ENCODE measurements at regions of chr1 and their contacts with region 1.

Region 1: GRCh38 chr1:18902523-18903290 is at the start of gene ALDH4A1:
- DNase-seq: peak; percentile 100
- H3K4me3 ChIP-seq: peak within 1 kb of the TSS; percentile 75 to 93 (median 82)
- H3K27ac ChIP-seq: peak within 1 kb of the TSS; percentile 85 to 96 (median 89)
- H3K4me1 ChIP-seq: peaks cover 22 to 39% (median 30%) of the 10 kb centered on the region in 4 donors
- H3K27me3 ChIP-seq: no peaks in the 10 kb centered on the region
- CTCF ChIP-seq: peak in 1 of 3 experiments; percentile 5
- EP300 ChIP-seq: no peak
- POLR2A ChIP-seq: no peak
- total RNA-seq, gene ALDH4A1: 25.1 to 29.5 (median 27.2) TPM

Region 2: DNA sequence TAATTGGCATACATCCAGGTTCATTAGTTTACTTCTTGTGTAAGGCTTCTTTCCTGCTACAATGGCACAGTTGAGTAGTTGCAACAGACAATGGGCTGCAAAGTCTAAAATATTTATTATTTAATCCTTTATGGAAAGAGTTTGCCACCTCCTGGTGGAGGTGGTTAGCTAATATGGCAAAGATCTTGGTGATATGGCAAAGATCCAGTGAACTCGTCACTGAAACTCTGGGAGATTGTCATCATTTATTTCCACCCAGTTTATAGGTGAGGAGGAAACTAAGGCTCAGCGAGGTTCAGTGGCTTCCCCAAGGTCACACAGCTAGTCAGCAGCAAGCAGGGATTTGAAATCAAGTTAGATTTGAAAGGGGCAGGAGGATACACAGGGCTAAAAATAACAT is 69.8 kb after region 1 on chr1:
- intact Hi-C with region 1: loop called (anchors 5 kb)
- DNase-seq: no peak
- H3K4me3 ChIP-seq: no peak overlapping the region
- H3K27ac ChIP-seq: no peak overlapping the region
- H3K4me1 ChIP-seq: peaks cover 6 to 12% (median 11%) of the 10 kb centered on the region in 4 donors
- H3K27me3 ChIP-seq: no peaks in the 10 kb centered on the region
- CTCF ChIP-seq: peak; percentile 51 to 59 (median 58)
- EP300 ChIP-seq: no peak
- POLR2A ChIP-seq: no peak

Region 3: GRCh38 chr1:19091196-19091953 is 188.7 kb after region 1 on chr1:
- intact Hi-C with region 1: loop called (anchors 5 kb)
- DNase-seq: no peak
- H3K4me3 ChIP-seq: no peak overlapping the region
- H3K27ac ChIP-seq: peak overlapping the region; percentile 21 to 63 (median 36)
- H3K4me1 ChIP-seq: peaks cover 19 to 29% (median 29%) of the 10 kb centered on the region in 4 donors
- H3K27me3 ChIP-seq: no peaks in the 10 kb centered on the region
- CTCF ChIP-seq: no peak
- EP300 ChIP-seq: no peak
- POLR2A ChIP-seq: no peak

Measured in esophagus muscularis mucosa (tissue), 4 donors.